ACHN (cell line): ENCODE measurements at regions of chr21 and their contacts with region 1.

Region 1: DNA sequence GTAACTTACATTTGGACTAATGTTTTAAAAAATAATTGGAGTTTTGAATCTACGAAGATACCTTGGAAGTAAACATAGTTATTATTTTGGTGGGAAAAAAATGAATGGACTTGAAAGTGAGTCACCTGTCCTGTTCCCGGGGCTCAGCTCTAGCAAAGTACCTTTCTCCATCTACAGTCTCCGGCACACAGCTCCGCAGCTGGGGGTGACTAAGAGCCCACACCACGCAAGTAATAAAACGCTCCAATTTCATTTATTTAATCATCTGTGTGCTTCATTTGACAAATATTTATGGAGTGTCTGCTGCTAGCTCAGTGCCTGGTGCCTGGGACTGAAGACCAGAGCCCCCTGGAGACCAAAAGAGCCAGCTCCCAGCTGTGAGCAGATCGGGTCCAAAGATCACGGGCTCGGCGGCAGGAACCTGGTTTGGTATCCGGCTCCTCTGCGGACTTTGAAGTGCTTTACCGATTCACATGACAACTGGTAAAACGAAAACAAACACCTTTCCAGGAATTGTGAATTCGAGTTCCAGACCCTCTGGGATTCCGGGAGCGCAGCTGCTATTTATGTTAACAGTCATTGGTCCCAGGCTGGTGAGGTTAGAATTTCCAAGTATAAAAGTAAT is 1.7 kb upstream of the RIPK4 start:
- DNase-seq: peak; percentile 67

Region 2: GRCh38 chr21:41612674-41613532 is 155.6 kb before region 1 on chr21:
- in situ Hi-C with region 1: loop called (anchors 25 kb)
- DNase-seq: peak; percentile 33

Region 3: DNA sequence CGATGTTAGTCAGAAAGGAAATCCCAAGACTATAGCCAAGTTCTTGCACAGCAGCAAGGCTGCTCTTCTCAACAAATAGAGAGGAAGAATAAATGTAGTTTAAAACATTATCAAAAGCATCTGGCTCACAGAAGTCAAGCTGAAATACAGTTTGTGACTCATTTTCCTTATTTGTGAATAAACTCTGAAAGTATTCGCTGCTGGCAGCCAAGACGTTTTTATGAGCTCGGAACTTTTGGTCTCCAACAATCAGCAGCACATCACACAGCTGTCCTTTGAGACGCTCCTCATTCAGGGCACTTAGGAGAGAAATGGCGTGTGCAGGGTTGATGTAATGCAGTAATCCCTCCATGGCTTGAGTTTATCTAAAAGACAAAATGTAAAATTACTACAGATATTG is 225.2 kb after region 1 on chr21:
- in situ Hi-C with region 1: no loop called
- DNase-seq: no peak